ENCODE measurements at regions of chr3 and their contacts with region 1.

Region 1: DNA sequence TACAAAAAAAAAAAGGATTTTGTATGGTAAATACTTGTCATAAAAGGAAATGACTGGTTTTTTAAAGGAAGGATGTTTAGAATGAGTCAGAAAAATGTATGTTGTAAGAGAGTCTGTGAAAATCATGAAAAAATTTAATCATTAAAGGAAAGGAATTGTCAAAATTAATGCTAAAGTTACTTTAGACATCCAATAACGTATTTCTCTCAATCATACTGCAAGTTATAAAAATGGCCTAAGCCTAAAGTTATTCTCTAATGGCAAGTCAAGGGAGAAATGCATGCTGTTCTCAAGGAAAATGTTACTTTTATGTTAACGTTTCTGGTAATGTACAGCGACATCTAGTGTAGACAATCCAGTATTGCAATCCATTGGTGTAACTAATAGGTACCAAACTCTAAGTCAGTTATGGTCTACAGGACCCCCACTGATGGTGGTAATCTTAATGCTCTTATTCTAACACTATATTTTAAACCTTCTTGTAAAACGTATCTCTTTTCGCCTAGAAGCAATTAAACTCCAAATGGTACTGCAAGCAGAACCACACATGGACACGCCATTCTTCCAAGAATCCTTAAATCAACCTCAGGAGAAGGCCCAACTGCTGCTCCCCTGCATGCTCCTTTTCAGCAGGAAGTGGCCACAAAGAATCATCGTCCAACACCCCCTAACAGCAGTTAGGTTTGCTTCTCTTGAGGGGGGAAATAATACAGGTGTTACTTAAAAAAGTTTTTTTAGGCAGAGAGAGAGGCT is 35.2 kb downstream of the NCEH1 start:
- DNase-seq: no peak
- H3K4me3 ChIP-seq: no peak overlapping the region
- H3K27ac ChIP-seq: no peak overlapping the region
- H3K4me1 ChIP-seq: no peaks in the 10 kb centered on the region
- H3K27me3 ChIP-seq: no peaks in the 10 kb centered on the region
- CTCF ChIP-seq: peak; percentile 53 to 81 (median 60)
- POLR2A ChIP-seq: no peak

Region 2: DNA sequence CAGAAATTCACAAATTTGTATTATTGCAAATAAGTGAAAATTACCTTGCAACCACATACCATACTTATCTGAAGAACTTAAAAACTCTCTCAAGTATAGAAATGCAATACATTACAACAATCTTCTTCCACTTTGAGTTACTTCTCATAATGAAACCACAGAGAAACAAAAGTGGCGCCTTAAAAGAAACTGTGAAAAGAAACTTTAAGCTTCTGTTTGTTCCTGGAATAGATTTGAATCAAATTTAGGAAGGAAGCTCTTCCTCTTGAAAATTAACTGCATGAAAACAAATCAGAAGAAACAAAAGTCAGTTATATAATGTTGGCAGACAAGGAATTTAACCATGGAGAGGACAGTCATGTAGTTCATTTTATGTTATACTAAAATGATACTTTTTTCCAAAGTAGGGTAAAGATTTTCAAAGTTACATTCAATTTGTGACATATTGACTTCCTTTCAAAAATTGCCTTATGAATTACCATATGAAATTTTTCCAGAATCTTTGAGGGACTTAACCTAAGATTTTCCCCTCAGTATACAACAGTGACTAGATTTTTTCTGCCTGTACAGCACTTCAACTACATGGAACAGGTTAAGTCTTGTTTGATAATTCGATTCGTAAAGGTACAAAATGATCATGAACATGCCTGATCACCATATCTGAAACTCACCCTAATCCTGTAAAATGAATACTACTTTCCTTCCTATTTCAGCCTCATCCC is 94.8 kb before region 1 on chr3:
- intact Hi-C with region 1: no loop called
- DNase-seq: no peak
- H3K4me3 ChIP-seq: no peak overlapping the region
- H3K27ac ChIP-seq: no peak overlapping the region
- H3K4me1 ChIP-seq: no peaks in the 10 kb centered on the region
- H3K27me3 ChIP-seq: no peaks in the 10 kb centered on the region
- CTCF ChIP-seq: no peak
- POLR2A ChIP-seq: no peak

Region 3: DNA sequence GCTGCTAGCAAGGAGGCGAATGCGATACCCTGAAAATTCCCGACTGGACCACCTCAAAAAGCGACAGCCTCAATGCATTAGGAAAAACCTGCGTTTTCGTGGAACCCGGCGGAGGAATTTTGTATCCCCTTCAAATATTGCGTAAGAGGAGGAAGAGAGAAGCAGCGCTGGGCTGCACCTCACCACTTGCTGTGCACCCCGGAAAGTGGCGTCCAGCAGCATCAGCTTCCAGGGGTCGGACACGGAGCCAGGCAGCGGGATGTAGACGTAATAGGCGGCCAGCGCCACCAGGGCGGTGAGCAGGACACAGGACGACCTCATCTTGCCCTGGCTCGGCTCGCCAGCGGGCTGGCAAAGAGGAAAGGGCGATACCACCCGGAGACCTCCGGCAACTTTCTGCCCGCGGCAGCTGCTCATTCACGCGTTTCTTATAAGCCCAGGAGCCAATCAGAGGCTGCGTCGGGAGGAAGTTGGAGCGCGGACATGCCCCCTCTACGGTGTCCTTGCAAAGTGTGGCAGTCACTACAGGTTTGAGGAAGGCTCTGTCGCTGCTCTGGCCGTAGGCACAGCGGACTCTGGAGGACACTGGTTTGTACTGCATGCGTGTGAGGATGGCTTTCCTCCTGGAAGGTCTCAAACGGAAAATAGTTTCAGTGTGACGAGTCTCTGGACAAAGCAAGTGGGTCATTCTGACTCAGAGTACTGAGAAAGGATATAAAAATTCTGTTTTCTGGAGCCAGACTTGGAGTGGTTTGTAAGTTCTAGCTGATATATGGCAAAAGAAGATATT is 35.2 kb after region 1 on chr3 and contains the start of gene NCEH1:
- intact Hi-C with region 1: loop called (anchors 5 kb)
- DNase-seq: peak; percentile 92
- H3K4me3 ChIP-seq: peak within 1 kb of the TSS; percentile 71 to 87
- H3K27ac ChIP-seq: peak within 1 kb of the TSS; percentile 80 to 88
- H3K4me1 ChIP-seq: no peaks in the 10 kb centered on the region
- H3K27me3 ChIP-seq: no peaks in the 10 kb centered on the region
- CTCF ChIP-seq: peak; percentile 54 to 92 (median 84)
- POLR2A ChIP-seq: peak; percentile 85
- total RNA-seq, gene NCEH1: 9.1 to 12.7 TPM

Region 4: GRCh38 chr3:173221010-173221409 is 545.4 kb after region 1 on chr3:
- intact Hi-C with region 1: no loop called
- DNase-seq: no peak
- H3K4me3 ChIP-seq: no peak overlapping the region
- H3K27ac ChIP-seq: no peak overlapping the region
- H3K4me1 ChIP-seq: no peaks in the 10 kb centered on the region
- H3K27me3 ChIP-seq: no peaks in the 10 kb centered on the region
- CTCF ChIP-seq: no peak
- POLR2A ChIP-seq: no peak

Region 5: DNA sequence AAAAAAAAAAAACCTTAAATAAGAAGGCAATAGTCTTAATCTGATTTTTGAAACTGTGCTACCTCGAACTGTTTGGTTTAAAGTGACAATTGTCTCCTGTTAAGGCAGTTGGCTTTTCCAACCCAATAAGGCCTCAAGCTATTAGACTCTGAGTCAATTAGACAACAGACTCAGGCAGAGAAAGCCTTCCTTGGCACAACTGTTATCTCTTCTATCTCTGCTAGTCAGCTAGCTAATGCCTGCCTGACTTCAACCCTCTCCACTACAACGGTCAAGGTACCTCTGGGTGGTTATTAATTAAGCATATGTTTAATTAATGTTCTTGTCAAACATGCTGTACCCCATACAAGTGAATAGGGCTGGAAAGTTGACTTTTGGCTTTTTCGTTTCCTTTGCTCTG is 611.7 kb after region 1 on chr3:
- intact Hi-C with region 1: no loop called
- DNase-seq: no peak
- H3K4me3 ChIP-seq: no peak overlapping the region
- H3K27ac ChIP-seq: no peak overlapping the region
- H3K4me1 ChIP-seq: no peaks in the 10 kb centered on the region
- H3K27me3 ChIP-seq: no peaks in the 10 kb centered on the region
- CTCF ChIP-seq: no peak
- POLR2A ChIP-seq: no peak

Measured in prostate gland (tissue), 2 donors.